ENCODE measurements at regions of chr22 and their contacts with region 1.

Region 1: GRCh38 chr22:39520054-39520891 is at the start of gene ATF4:
- DNase-seq: peak; percentile 95 to 98
- ATAC-seq: peak; percentile 83 to 95 (median 90)
- H3K4me3 ChIP-seq: peak within 1 kb of the TSS; percentile 81 to 100 (median 98)
- H3K27ac ChIP-seq: peak within 1 kb of the TSS; percentile 97 to 100 (median 100)
- H3K4me1 ChIP-seq: peaks cover 29 to 54% (median 52%) of the 10 kb centered on the region in 9 donors
- H3K27me3 ChIP-seq: no peaks in the 10 kb centered on the region
- CTCF ChIP-seq: no peak
- total RNA-seq, gene ATF4: 95.2 to 319 (median 133) TPM

Region 2: GRCh38 chr22:39319270-39320022 is 200.8 kb before region 1 on chr22 and contains the start of gene RPL3:
- intact Hi-C with region 1: loop called in 5 of 10 experiments (anchors 5 to 10 kb)
- DNase-seq: peak; percentile 97 to 98
- ATAC-seq: peak; percentile 87 to 95 (median 93)
- H3K4me3 ChIP-seq: peak within 1 kb of the TSS; percentile 59 to 83 (median 76)
- H3K27ac ChIP-seq: peak within 1 kb of the TSS; percentile 91 to 99 (median 98)
- H3K4me1 ChIP-seq: peaks cover 32 to 52% (median 47%) of the 10 kb centered on the region in 9 donors
- H3K27me3 ChIP-seq: no peaks in the 10 kb centered on the region
- CTCF ChIP-seq: peak in 7 of 9 donors; percentile 12 to 45 (median 29)
- total RNA-seq, gene RPL3: 215 to 604 (median 286) TPM

Region 3: GRCh38 chr22:39392341-39392948 is 127.8 kb before region 1 on chr22:
- intact Hi-C with region 1: loop called in 1 of 10 experiments (anchors 5 kb)
- DNase-seq: no peak
- ATAC-seq: no peak
- H3K4me3 ChIP-seq: no peak overlapping the region
- H3K27ac ChIP-seq: no peak overlapping the region
- H3K4me1 ChIP-seq: peaks cover 0 to 12% (median 9%) of the 10 kb centered on the region in 9 donors
- H3K27me3 ChIP-seq: no peaks in the 10 kb centered on the region
- CTCF ChIP-seq: no peak

Region 4: GRCh38 chr22:39462443-39463221 is 57.6 kb before region 1 on chr22:
- intact Hi-C with region 1: loop called in 2 of 10 experiments (anchors 2 to 5 kb)
- DNase-seq: peak; percentile 73 to 74
- ATAC-seq: peak; percentile 44 to 87 (median 76)
- H3K4me3 ChIP-seq: no peak overlapping the region
- H3K27ac ChIP-seq: peak overlapping the region; percentile 61 to 89 (median 78)
- H3K4me1 ChIP-seq: peaks cover 10 to 83% (median 49%) of the 10 kb centered on the region in 9 donors
- H3K27me3 ChIP-seq: peaks cover 0 to 20% (median 8%) of the 10 kb centered on the region in 7 donors
- CTCF ChIP-seq: peak in 6 of 9 donors; percentile 16 to 59 (median 36)

Region 5: DNA sequence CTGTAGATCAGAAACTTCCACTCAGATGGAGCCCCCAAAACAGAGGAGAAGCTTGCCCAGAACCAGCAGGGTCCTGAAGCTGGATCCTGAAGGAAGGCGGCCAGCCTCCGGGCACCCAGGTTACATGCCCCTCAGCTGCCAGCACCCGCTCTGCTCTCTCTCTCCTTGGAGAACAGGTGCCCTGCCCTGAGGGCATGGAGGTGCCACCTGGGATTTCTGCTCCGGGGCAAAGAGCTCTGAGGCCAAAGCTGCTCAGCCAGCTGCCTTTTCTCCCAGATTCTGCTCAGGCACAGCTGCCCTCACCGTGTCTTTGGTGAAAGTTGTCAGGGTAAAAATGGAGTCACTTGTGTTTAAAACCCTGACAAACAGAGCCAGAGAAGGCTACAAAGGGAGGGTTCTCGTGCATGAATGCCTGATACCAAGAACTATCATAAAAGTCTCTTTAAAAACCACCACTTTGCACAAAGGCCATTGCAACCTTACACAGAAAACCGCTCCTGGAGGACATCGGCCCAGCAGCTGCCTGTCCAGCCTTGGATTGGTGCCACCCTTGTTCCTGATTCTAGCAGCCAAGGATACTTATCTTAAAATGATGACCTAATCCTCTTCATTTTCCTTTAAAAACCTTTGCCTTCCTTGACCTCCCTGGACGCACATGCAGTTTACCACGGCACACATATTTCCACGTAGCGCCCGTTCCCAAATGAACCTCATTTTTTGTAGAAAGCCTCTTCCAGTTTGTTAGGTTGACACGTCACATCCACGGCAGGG is 190.3 kb after region 1 on chr22:
- intact Hi-C with region 1: no loop called
- DNase-seq: peak in 1 of 2 donors; percentile 47
- ATAC-seq: peak in 1 of 8 donors; percentile 46
- H3K4me3 ChIP-seq: no peak overlapping the region
- H3K27ac ChIP-seq: no peak overlapping the region
- H3K4me1 ChIP-seq: peaks cover 0 to 10% (median 0%) of the 10 kb centered on the region in 9 donors
- H3K27me3 ChIP-seq: peaks cover 0 to 70% (median 20%) of the 10 kb centered on the region in 7 donors
- CTCF ChIP-seq: no peak

Measured in heart right ventricle (tissue), 16 donors.